Activated CD4-positive, alpha-beta memory T cell treated with anti-CD3 and anti-CD28 coated beads for 36 hours (primary cell): ENCODE measurements at regions of chr4 and their contacts with region 1.

Region 1: DNA sequence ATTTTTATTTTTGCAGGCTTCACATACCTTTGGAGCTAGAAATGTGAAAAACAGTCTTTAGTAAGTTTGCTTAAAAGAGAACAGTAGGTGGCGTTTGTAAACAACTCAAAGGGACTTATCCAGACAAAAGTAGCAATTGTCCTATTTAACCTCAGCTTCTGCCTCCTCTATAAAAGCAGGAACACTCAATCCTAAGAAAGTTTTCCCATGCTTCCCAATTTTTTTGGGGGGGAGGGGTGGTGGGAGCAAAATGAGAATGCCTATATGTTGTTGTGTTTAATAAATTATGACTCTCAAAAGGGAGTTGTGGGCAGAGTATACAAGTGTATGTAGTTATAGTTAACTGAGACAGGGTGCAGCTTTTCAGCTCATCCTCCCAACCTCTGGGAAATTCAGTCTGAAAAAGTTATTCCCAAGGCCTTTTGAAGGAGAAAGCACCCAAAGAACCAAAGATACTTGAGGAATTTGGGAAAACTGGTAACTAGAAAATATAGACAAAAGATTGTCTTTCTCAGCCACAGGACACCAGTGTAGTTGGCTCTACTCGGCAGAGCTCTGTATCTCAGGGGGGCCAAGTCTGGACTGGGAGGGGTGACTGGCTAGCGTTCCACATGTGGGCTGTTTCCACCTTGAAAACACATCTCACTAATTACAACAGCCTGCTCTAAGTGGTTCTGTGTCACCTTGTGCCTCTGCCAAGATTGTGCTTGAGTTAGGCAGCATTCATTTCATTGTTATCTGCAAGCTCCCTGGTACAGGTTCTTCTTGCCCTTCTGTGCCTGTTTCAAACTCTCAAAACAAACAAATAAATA is 2.8 kb downstream of the SFRP2 start:
- DNase-seq: no peak
- H3K4me3 Mint-ChIP-seq: no peak overlapping the region
- H3K27ac Mint-ChIP-seq: no peak overlapping the region
- H3K4me1 Mint-ChIP-seq: peaks cover 18% of the 10 kb centered on the region
- H3K27me3 Mint-ChIP-seq: peaks cover 74% of the 10 kb centered on the region

Region 2: DNA sequence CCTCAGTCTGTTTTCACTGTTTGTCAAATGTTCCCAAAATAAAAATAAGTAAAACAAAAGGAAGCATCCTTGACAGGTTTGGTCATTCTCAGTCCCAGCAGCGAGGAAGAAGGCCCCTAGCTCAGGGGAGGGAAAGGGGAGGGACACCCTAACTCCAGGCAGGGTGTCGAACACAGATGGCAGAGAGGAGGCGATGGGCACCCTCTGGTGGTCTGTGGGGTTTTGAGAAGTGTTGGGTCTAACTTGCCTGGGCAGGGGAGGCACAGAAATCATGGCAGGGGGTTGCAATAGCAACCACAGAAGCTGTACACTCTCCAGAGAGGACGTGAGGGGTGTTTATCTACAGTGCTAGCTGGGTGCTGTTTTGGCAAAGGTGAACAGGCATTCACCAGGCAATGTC is 232.5 kb after region 1 on chr4:
- CTCF ChIA-PET with region 1: interaction called, 15 read pairs
- POLR2A ChIA-PET with region 1: no interaction called
- intact Hi-C with region 1: loop called (anchors 5 kb)
- DNase-seq: peak; percentile 28
- H3K4me3 Mint-ChIP-seq: no peak overlapping the region
- H3K27ac Mint-ChIP-seq: no peak overlapping the region
- H3K4me1 Mint-ChIP-seq: no peaks in the 10 kb centered on the region
- H3K27me3 Mint-ChIP-seq: peaks cover 2% of the 10 kb centered on the region

Region 3: DNA sequence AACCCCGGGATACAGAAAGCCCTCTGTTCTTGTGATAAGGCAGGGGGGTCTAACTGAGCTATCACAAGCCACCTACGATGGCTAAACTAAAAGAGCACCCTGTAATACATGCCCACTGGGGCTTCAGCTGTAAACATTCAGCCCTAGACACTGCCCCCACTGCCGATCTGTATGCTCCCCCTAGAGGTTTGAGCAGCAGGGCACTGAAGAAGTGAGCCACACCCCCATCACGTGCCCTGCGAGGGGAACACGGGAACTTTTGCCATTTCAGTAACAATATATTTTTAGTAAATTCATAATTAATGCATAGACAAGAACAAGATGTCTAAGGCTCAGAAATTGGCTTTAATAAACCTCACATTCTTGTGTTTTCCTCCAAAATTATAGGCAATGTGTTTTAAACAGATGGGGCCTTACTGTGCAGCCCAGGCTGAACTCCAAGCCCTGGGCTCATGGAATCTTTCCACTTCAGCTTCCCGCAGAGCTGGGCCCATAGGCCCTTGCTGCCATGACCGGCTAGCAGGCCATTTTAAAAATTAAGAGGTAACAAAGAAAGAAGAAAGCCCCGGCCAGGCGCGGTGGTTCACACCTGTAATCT is 238.1 kb after region 1 on chr4:
- CTCF ChIA-PET with region 1: interaction called, 15 read pairs
- POLR2A ChIA-PET with region 1: no interaction called
- intact Hi-C with region 1: loop called (anchors 5 kb)
- DNase-seq: peak; percentile 22
- H3K4me3 Mint-ChIP-seq: no peak overlapping the region
- H3K27ac Mint-ChIP-seq: no peak overlapping the region
- H3K4me1 Mint-ChIP-seq: no peaks in the 10 kb centered on the region
- H3K27me3 Mint-ChIP-seq: peaks cover 12% of the 10 kb centered on the region

Region 4: DNA sequence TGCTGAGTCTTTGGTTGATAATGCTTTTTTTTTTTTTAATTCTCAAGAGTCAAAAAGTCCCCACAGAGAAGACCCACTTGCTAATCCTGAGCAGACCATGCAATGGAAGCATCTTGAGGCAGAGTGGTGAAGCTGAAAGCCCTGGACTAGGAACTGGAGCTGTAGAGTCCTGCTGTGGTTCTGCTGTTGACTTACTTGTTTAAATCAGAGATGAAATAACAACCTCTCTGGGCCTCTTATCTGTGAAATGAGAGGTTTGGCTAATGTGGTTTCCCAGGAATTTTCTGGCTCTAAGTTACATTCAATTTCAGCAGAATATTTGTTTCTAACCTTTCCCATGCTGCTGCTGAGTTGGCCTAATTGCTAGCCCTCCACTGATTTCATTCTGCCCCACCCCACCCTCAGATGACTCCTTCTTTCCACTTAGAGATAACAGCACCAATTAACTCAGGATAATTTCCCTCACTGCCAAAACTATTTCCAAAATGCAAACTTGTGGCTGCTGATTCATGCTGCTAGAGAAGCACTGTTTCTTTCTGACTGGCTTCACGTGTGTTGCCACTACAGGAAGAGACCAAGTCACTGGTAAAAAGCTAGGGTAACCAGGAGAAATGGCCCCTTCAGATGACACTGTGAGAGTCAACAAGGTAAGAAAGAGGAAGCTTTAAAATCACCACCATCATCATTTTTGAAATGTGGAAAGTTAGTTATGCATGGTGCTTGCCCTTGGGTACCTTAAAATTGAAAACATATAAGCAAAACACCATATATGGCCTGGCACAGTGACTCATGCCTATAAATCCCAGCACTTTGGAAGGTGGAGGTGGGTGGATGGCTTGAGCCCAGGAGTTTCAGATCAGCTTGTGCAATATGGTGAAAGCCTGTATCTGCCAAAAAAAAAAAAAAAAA is 379.1 kb after region 1 on chr4:
- CTCF ChIA-PET with region 1: no interaction called
- POLR2A ChIA-PET with region 1: no interaction called
- intact Hi-C with region 1: loop called (anchors 5 kb)
- DNase-seq: peak; percentile 49
- H3K4me3 Mint-ChIP-seq: no peak overlapping the region
- H3K27ac Mint-ChIP-seq: peak overlapping the region; percentile 11
- H3K4me1 Mint-ChIP-seq: peaks cover 16% of the 10 kb centered on the region
- H3K27me3 Mint-ChIP-seq: peaks cover 9% of the 10 kb centered on the region

Region 5: DNA sequence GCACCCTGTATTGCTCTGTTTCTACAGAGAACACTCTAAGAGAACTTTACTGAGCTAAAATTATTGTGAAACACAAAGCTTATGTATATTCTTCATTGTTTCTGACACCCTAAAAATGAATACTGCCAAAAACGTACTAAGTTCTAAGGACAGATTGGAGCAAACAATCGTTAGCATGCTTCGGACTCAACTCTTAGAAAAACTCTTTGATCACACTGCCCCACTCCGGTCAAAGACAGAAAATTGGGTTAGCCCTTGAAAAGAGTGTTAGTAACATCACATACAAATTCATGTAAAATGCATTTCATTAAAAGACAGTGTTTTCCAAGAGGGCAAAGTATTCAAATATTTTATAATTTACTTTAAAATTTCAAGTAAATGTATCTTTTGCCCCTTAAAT is 528.1 kb after region 1 on chr4:
- CTCF ChIA-PET with region 1: no interaction called
- POLR2A ChIA-PET with region 1: no interaction called
- intact Hi-C with region 1: no loop called
- DNase-seq: no peak
- H3K4me3 Mint-ChIP-seq: no peak overlapping the region
- H3K27ac Mint-ChIP-seq: no peak overlapping the region
- H3K4me1 Mint-ChIP-seq: no peaks in the 10 kb centered on the region
- H3K27me3 Mint-ChIP-seq: peaks cover 1% of the 10 kb centered on the region

Region 6: DNA sequence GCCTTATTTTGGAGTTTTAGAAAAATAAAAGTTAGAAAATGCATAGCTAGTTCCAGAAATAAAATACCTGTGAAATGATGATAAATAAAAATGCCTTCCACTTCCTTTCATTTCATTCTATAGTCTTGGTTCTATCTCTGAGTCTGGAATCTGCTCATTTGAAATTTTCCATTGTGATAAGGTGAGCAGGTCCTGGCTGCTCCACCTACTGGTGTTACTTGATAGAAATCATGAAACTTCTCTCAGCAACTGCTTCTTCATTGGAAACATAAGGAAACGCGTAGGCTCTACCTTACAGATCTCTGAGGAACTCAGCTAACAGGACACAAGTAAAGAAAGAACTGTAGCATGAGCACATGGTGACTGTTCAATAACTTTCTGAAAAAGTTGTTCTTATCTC is 563.7 kb after region 1 on chr4:
- CTCF ChIA-PET with region 1: no interaction called
- POLR2A ChIA-PET with region 1: no interaction called
- intact Hi-C with region 1: loop called (anchors 1 kb)
- DNase-seq: no peak
- H3K4me3 Mint-ChIP-seq: no peak overlapping the region
- H3K27ac Mint-ChIP-seq: no peak overlapping the region
- H3K4me1 Mint-ChIP-seq: no peaks in the 10 kb centered on the region
- H3K27me3 Mint-ChIP-seq: peaks cover 2% of the 10 kb centered on the region

Region 7: GRCh38 chr4:154626793-154627484 is 840.8 kb after region 1 on chr4:
- CTCF ChIA-PET with region 1: no interaction called
- POLR2A ChIA-PET with region 1: no interaction called
- intact Hi-C with region 1: loop called (anchors 10 kb)
- DNase-seq: peak; percentile 68
- H3K4me3 Mint-ChIP-seq: no peak overlapping the region
- H3K27ac Mint-ChIP-seq: no peak overlapping the region
- H3K4me1 Mint-ChIP-seq: no peaks in the 10 kb centered on the region
- H3K27me3 Mint-ChIP-seq: peaks cover 15% of the 10 kb centered on the region